ENCODE measurements at regions of chr12 and their contacts with region 1.

Region 1: DNA sequence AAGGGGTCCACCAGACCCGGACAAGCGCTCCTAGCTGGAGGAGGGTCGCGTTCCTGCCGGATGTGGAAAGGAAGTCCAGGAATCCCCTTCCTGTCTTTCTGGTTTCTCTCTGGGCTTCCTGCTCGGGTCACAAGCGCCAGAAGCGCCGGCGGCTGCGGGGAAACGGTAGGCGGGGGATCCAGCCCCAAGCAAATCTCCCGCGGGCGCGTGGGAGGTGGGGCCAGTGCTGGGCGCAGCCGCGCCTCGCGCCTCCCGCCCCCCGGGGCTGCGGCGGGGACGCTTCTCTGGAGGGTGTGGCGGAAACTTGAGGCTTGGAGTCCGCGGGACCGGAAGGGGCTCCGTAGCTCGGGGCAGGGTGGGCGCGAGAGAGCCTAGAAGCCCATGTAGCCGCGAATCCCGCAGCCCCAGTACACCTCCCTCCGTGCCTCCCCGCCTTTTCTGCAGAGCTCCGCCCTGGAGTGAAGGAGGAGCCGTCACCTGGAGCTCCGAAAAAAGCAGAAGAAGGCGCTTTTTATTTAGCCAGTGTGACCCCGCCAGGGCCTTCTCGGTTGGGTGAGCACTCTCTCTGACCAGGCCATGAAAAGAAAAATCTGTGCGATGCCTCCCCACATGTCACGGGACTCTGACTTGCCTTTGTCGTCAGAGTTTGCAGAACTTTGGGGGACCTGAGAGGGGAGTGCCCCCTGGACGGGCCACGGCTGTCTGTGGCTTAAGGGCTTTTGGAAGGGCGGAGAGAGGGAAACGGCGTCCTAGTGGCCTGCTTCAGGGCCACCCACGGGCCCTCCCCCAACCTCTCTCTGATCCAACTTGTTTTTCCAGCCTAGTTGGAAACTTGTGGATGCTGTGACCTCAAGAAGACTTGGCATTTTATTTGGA is 21.4 kb upstream of the CLEC2D start:
- DNase-seq: peak; percentile 81 to 97 (median 92)
- ATAC-seq: peak; percentile 72 to 75
- H3K4me3 Mint-ChIP-seq: peak overlapping the region; percentile 94 to 100 (median 98)
- H3K27ac Mint-ChIP-seq: peak overlapping the region; percentile 96 to 99 (median 98)
- H3K4me1 Mint-ChIP-seq: peaks cover 26 to 67% (median 46%) of the 10 kb centered on the region in 4 donors
- H3K27me3 Mint-ChIP-seq: peaks cover 0 to 2% (median 0%) of the 10 kb centered on the region in 5 donors

Region 2: GRCh38 chr12:9597365-9597764 is 50.7 kb before region 1 on chr12:
- POLR2A ChIA-PET with region 1: no interaction called
- DNase-seq: no peak
- ATAC-seq: no peak
- H3K4me3 Mint-ChIP-seq: no peak overlapping the region
- H3K27ac Mint-ChIP-seq: no peak overlapping the region
- H3K4me1 Mint-ChIP-seq: peaks cover 0 to 6% (median 0%) of the 10 kb centered on the region in 4 donors
- H3K27me3 Mint-ChIP-seq: no peaks in the 10 kb centered on the region

Region 3: GRCh38 chr12:9634177-9634803 is 13.8 kb before region 1 on chr12:
- POLR2A ChIA-PET with region 1: interaction called, 106 read pairs
- DNase-seq: peak; percentile 58 to 90 (median 78)
- ATAC-seq: peak; percentile 86 to 92
- H3K4me3 Mint-ChIP-seq: peak overlapping the region; percentile 45 to 82 (median 72)
- H3K27ac Mint-ChIP-seq: peak overlapping the region; percentile 82 to 99 (median 92)
- H3K4me1 Mint-ChIP-seq: peaks cover 27 to 78% (median 63%) of the 10 kb centered on the region in 4 donors
- H3K27me3 Mint-ChIP-seq: no peaks in the 10 kb centered on the region

Region 4: GRCh38 chr12:9687228-9687627 is 39.2 kb after region 1 on chr12:
- POLR2A ChIA-PET with region 1: interaction called, 30 read pairs
- DNase-seq: no peak
- ATAC-seq: peak; percentile 16 to 32
- H3K4me3 Mint-ChIP-seq: peak overlapping the region in 8 of 10 donors; percentile 22 to 68 (median 49)
- H3K27ac Mint-ChIP-seq: peak overlapping the region in 9 of 10 donors; percentile 74 to 91 (median 83)
- H3K4me1 Mint-ChIP-seq: peaks cover 20 to 81% (median 56%) of the 10 kb centered on the region in 4 donors
- H3K27me3 Mint-ChIP-seq: no peaks in the 10 kb centered on the region

Region 5: GRCh38 chr12:9702255-9702654 is 54.2 kb after region 1 on chr12:
- POLR2A ChIA-PET with region 1: interaction called, 153 read pairs
- DNase-seq: peak in 8 of 10 donors; percentile 34 to 80 (median 68)
- ATAC-seq: peak; percentile 60 to 88
- H3K4me3 Mint-ChIP-seq: peak overlapping the region; percentile 47 to 85 (median 72)
- H3K27ac Mint-ChIP-seq: peak overlapping the region; percentile 82 to 97 (median 94)
- H3K4me1 Mint-ChIP-seq: peaks cover 31 to 84% (median 66%) of the 10 kb centered on the region in 4 donors
- H3K27me3 Mint-ChIP-seq: no peaks in the 10 kb centered on the region

Region 6: GRCh38 chr12:9707864-9708808 is 60.1 kb after region 1 on chr12:
- POLR2A ChIA-PET with region 1: interaction called, 153 read pairs
- DNase-seq: peak; percentile 30 to 82 (median 70)
- ATAC-seq: peak; percentile 80 to 88
- H3K4me3 Mint-ChIP-seq: peak overlapping the region; percentile 58 to 82 (median 72)
- H3K27ac Mint-ChIP-seq: peak overlapping the region; percentile 79 to 96 (median 94)
- H3K4me1 Mint-ChIP-seq: peaks cover 26 to 86% (median 70%) of the 10 kb centered on the region in 4 donors
- H3K27me3 Mint-ChIP-seq: no peaks in the 10 kb centered on the region

Region 7: GRCh38 chr12:9721394-9722092 is 73.5 kb after region 1 on chr12:
- POLR2A ChIA-PET with region 1: no interaction called
- DNase-seq: no peak
- ATAC-seq: peak in 1 of 2 donors; percentile 58
- H3K4me3 Mint-ChIP-seq: peak overlapping the region in 1 of 10 donors; percentile 43
- H3K27ac Mint-ChIP-seq: peak overlapping the region in 3 of 10 donors; percentile 41 to 71 (median 70)
- H3K4me1 Mint-ChIP-seq: peaks cover 0 to 57% (median 2%) of the 10 kb centered on the region in 4 donors
- H3K27me3 Mint-ChIP-seq: no peaks in the 10 kb centered on the region

Region 8: GRCh38 chr12:9741726-9742125 is 93.7 kb after region 1 on chr12:
- POLR2A ChIA-PET with region 1: interaction called, 63 read pairs
- DNase-seq: peak; percentile 30 to 94 (median 82)
- ATAC-seq: peak; percentile 76 to 80
- H3K4me3 Mint-ChIP-seq: peak overlapping the region; percentile 24 to 88 (median 76)
- H3K27ac Mint-ChIP-seq: peak overlapping the region; percentile 79 to 100 (median 98)
- H3K4me1 Mint-ChIP-seq: peaks cover 27 to 66% (median 63%) of the 10 kb centered on the region in 4 donors
- H3K27me3 Mint-ChIP-seq: no peaks in the 10 kb centered on the region

Region 9: GRCh38 chr12:9760699-9761418 is 112.8 kb after region 1 on chr12 and contains the start of gene CD69:
- POLR2A ChIA-PET with region 1: interaction called, 23 read pairs
- DNase-seq: peak; percentile 52 to 92 (median 86)
- ATAC-seq: peak; percentile 49 to 64
- H3K4me3 Mint-ChIP-seq: peak within 1 kb of the TSS; percentile 87 to 99 (median 96)
- H3K27ac Mint-ChIP-seq: peak within 1 kb of the TSS; percentile 96 to 100 (median 99)
- H3K4me1 Mint-ChIP-seq: peaks cover 30 to 74% (median 59%) of the 10 kb centered on the region in 4 donors
- H3K27me3 Mint-ChIP-seq: no peaks in the 10 kb centered on the region
- polyA plus RNA-seq, gene CD69: 73.5 to 248 (median 87.9) TPM

Region 10: GRCh38 chr12:9773216-9773877 is 125.3 kb after region 1 on chr12:
- POLR2A ChIA-PET with region 1: no interaction called
- DNase-seq: peak in 3 of 10 donors; percentile 41 to 58 (median 54)
- ATAC-seq: peak; percentile 77 to 89
- H3K4me3 Mint-ChIP-seq: peak overlapping the region; percentile 17 to 74 (median 50)
- H3K27ac Mint-ChIP-seq: peak overlapping the region in 8 of 10 donors; percentile 2 to 88 (median 68)
- H3K4me1 Mint-ChIP-seq: peaks cover 24 to 84% (median 66%) of the 10 kb centered on the region in 4 donors
- H3K27me3 Mint-ChIP-seq: no peaks in the 10 kb centered on the region